Posterior vena cava (tissue), 2 donors: ENCODE measurements at regions of chr10 and their contacts with region 1.

Region 1: DNA sequence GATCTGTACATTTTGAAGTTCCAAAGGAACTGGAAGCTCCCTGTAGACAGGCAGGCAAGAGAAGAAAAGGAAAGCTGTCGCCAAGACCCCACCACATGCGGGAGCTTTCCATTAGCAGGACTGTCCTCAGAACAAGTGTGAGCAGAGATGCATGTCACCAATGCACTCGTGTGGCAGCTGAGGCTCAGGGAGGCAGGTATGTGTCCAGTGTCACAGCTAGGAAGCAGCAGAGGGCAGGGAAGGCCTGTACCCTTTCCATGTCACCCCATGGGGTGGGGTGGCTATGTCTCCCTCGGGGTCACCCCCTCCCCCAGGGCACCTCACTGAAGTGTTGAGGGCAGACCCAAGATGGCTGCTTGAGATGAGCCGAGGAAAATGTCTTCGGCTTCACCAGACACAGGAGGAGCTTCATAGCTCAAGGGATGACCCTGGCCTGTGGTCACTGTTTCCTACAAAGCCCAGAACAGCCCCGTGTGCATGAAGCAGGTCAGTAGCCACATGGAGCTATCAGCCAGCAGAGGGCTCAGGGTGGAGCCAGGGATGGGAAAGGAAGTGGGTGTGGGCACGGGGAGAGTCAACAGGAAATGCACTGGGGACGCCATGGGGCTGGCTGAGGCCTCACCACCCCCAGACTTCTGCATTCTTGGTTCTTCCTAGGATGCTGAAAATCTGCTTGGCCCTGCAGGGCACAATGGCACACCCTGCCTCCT is 96.6 kb downstream of the FAM53B start:
- DNase-seq: peak; percentile 94

Region 2: DNA sequence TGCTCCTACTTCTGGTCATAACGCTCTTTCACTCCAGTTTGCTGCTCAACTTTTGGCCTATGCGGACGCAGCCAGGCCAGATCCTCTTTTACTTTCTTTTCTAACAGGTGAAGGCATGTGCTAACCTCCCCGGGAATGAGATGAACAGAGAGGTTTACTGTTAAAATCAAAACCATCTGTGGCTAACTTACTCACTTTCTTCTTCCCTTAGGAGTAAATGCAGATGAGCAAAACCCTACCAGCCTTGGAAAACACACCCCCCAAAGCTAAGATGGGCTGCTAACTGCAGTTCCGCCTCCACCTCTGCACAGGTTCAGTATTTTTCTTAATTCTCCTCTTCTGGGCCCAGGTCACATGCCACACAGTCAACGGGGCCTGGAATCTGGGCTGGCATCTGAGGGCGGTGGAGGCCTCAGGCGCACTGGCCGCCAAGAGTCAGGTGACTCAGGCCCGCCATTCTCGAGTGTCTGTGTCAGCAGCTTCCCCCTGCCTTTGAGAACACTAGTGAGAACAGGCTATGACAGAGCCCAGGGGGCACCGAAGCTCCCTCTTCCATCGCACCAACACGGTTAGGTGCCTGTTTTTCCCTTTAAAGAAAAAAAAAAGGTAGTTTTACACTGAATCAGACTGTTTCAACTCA is 85.5 kb after region 1 on chr10:
- intact Hi-C with region 1: loop called in 1 of 2 experiments (anchors 10 kb)
- DNase-seq: no peak

Region 3: DNA sequence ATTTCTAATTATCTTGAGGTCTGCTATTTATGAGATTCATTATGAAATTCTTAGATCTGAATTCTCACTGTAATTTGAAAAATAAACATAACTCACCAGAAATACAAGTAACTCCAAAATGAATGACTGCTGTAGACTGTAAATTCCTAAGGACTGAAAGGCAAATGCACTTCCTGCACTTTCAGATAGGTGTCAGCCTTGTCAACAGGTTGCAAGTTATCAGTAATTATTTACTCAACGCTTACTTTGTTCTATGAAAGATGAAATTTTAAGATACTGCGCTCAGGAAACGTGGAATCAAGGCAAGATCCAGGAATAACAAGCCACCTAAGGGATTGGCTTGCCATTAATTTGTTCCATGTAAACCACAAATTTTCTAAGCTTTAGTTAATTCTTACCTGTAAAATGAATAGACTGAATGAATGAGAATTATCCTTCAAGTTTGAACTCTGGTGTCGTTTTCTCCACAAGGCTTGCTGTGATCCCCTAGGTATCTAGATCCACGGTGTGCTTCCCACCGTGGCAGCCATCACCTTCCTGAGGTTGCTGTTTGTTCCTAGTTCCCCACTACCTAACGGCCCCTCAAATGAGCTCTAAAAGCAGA is 1220.9 kb after region 1 on chr10:
- intact Hi-C with region 1: no loop called
- DNase-seq: no peak